ENCODE measurements at regions of chr1 and their contacts with region 1.

Region 1: DNA sequence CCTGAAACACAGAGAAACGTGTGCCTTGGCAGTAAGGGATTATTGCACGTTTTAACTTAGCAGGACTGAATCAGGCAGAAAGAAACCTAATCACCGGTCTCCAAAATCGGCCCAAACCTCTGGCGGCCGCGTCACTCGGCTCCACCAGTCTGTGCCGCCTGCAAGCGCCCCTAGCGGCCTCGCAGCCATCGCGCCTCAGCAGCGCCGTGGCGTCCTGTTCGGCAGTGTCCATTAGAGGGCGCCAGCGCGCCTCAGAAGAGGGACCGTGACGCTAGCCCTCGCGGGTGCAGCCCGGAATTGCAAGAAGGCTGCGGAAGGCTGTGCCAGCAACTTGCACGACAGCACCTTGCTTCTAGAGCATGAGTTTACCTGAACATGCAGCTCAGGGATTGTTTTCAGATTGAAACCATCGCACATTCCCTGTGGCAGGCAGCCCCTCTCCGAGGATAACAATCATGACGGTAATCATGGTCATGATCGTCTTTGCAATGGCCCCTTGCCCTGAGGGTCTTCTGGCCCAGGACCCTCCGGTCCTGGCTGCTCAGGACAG is 164.4 kb downstream of the TRIM33 start:
- DNase-seq: peak; percentile 97
- H3K4me3 Mint-ChIP-seq: peak overlapping the region; percentile 89
- H3K27ac Mint-ChIP-seq: peak overlapping the region; percentile 94
- H3K4me1 Mint-ChIP-seq: peaks cover 13% of the 10 kb centered on the region
- H3K27me3 Mint-ChIP-seq: no peaks in the 10 kb centered on the region

Region 2: DNA sequence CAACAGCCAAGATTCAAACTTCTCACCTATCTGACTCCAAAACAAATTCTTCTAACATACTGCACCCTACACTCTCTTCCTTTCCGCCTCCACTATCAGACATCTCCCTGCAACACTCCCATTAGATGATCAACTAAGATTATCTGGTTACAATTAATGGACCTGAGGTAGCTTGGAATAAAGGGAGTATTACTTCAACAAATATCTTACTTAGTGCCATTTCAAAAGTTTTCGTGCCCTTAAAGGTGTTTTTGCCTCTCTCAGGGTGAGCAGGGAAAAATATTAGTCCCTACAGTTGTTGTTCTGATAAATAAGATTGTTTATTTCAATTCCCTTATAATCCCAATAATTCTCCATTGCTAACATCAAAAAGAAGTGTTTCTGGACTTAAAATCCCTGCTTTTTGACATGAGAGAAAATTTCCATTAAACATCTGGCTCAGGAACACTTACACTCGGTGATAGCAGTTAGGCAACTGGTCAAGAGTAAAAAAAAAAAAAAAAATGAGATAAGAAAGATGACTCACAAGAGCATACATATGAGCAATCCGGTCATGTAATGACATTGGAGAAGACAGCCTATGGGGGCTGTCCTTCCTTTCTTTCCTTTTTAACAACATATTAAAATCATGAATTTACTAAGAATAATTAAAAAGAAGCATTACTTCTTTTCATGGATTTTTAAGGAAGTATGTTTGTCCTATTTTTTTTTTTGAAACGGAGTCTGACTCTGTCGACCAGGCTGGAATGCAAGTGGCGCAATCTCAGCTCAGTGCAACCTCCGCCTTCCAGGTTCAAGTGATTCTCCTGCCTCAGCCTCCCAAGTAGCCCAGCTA is 541.9 kb before region 1 on chr1:
- intact Hi-C with region 1: loop called (anchors 5 kb)
- DNase-seq: no peak
- H3K4me3 Mint-ChIP-seq: no peak overlapping the region
- H3K27ac Mint-ChIP-seq: peak overlapping the region; percentile 40
- H3K4me1 Mint-ChIP-seq: peaks cover 58% of the 10 kb centered on the region
- H3K27me3 Mint-ChIP-seq: no peaks in the 10 kb centered on the region

Region 3: GRCh38 chr1:114310695-114311271 is 35.8 kb before region 1 on chr1:
- intact Hi-C with region 1: no loop called
- DNase-seq: no peak
- H3K4me3 Mint-ChIP-seq: no peak overlapping the region
- H3K27ac Mint-ChIP-seq: no peak overlapping the region
- H3K4me1 Mint-ChIP-seq: no peaks in the 10 kb centered on the region
- H3K27me3 Mint-ChIP-seq: peaks cover 4% of the 10 kb centered on the region

Region 4: GRCh38 chr1:114428083-114428749 is 81.7 kb after region 1 on chr1:
- intact Hi-C with region 1: loop called (anchors 2 kb)
- DNase-seq: no peak
- H3K4me3 Mint-ChIP-seq: no peak overlapping the region
- H3K27ac Mint-ChIP-seq: no peak overlapping the region
- H3K4me1 Mint-ChIP-seq: peaks cover 9% of the 10 kb centered on the region
- H3K27me3 Mint-ChIP-seq: no peaks in the 10 kb centered on the region

Region 5: DNA sequence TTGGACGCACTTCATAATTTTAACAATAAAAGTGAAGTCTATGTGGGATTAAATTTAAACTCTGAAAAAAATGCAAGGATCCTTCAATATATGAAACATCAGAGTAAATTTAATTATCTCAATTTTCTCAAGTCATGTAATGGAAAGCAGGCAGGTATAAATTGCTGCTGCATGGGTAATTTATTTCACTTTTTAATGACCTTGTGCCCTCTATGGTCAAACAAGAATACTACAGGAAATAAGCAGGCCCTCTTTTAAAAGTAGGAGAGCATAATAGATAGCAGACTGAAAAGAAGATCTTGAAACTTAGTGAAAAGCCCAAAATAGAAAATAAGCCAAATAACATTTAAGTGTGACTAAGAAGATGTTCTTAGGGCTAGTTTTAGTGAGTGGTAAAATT is 212.0 kb after region 1 on chr1:
- intact Hi-C with region 1: loop called (anchors 1 kb)
- DNase-seq: no peak
- H3K4me3 Mint-ChIP-seq: no peak overlapping the region
- H3K27ac Mint-ChIP-seq: no peak overlapping the region
- H3K4me1 Mint-ChIP-seq: no peaks in the 10 kb centered on the region
- H3K27me3 Mint-ChIP-seq: no peaks in the 10 kb centered on the region

Region 6: DNA sequence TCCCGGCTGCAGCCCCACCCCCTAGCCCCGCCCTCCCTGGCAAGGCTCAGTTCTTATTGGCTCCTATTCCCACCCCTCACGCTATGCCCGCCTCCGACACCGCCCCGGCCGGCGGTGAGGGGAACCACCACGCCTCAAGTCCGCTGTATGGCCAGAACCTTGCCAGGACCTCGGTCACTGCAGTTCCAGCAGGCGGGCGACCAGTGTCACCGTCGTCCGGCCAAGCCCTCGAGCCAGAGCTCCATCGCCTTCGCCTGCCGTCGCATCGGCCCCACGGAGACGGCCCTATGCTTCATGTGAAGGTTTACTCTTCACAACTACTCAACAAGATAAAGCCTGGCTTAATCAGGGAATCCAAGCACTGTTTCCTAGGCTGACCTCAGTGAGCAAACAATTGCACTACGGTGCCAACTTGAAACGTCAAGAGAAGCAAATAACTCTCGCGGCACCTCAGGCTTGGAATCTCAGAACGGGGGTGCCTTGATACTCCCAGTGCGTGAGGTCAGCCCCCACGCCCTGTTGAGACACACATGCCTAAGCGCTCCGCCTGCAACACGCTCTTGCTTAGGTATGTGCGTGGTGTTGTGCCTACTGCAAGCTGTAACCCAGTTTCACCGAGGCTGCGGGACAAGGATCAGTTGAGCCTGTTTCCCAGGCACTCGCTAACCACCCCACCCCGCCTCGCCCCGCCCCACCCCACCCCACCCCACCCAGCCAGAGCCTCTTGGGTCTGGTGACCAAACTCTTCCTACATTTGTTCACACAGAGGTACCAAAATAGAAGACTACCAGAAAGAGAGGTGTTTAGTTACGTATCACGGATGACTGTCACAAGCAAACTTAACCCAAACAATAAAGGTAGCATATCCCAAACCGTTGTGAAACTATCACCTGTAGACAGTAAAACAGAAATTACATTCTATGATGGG is 323.8 kb after region 1 on chr1:
- intact Hi-C with region 1: loop called (anchors 2 kb)
- DNase-seq: peak; percentile 72
- H3K4me3 Mint-ChIP-seq: peak overlapping the region; percentile 86
- H3K27ac Mint-ChIP-seq: no peak overlapping the region
- H3K4me1 Mint-ChIP-seq: peaks cover 4% of the 10 kb centered on the region
- H3K27me3 Mint-ChIP-seq: peaks cover 41% of the 10 kb centered on the region